IMR-90 (cell line): ENCODE measurements at regions of chr2 and their contacts with region 1.

Region 1: DNA sequence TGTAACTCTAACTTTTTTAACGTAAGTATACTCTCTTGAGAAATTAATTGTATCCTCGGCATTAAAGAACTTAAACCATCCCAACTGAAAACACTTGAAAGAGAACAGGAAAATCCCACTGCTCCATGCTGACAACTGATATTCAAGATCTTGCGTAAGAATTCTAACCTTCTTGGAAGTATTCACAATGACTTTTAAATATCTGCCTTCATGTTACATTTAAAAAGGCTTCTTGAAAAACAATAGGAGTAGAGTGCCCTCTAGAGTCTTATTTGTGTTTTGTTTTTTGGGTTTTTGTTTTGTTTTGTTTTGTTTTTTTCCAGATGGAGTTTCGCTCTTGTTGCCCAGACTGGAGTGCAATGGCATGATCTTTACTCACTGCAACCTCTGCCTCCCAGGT is 65.4 kb upstream of the DNAJC10 start:
- DNase-seq: peak; percentile 76
- ATAC-seq: peak; percentile 48; the same call in 1 of the 2 replicates
- H3K4me3 ChIP-seq: no peak overlapping the region
- H3K27ac ChIP-seq: no peak overlapping the region
- H3K4me1 ChIP-seq: no peaks in the 10 kb centered on the region
- H3K27me3 ChIP-seq: no peaks in the 10 kb centered on the region
- CTCF ChIP-seq: peak; percentile 62
- POLR2A ChIP-seq: no peak
- RAD21 ChIP-seq: peak; percentile 78

Region 2: DNA sequence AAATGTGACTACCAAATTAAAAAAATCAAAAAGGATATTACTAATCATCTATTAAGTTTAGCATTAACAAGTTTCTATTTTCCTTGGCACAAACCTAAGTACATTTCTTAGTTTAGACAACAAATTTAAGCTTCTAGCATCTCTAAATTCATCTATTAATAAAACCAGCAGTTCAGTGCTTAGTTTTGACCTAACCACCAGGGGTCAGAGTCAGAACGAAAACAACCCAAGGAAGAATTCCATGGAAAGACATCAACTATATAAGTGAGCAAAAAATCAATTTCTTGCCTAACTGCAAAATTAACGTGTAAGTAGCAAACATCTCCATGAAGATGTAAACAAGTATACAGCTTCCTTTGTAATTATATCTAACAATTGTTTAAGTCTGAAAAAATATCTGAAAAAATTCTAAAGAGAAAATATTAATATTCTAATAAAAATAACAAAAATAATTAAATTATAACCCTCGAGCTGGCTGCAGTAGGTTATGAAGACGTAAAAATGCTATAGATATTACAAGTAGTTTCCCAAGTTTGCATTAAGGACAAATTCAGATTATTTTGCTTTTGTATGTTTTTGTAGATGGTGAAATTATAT is 1077.5 kb before region 1 on chr2:
- CTCF ChIA-PET with region 1: no interaction called
- POLR2A ChIA-PET with region 1: no interaction called
- dilution Hi-C with region 1: no loop called
- in situ Hi-C with region 1: no loop called
- intact Hi-C with region 1: loop called (anchors 5 kb)
- DNase-seq: peak; percentile 50
- ATAC-seq: peak; percentile 54; the same call in 1 of the 2 replicates
- H3K4me3 ChIP-seq: no peak overlapping the region
- H3K27ac ChIP-seq: no peak overlapping the region
- H3K4me1 ChIP-seq: no peaks in the 10 kb centered on the region
- H3K27me3 ChIP-seq: peaks cover 9% of the 10 kb centered on the region
- CTCF ChIP-seq: peak; percentile 55
- POLR2A ChIP-seq: no peak
- RAD21 ChIP-seq: peak; percentile 47

Region 3: DNA sequence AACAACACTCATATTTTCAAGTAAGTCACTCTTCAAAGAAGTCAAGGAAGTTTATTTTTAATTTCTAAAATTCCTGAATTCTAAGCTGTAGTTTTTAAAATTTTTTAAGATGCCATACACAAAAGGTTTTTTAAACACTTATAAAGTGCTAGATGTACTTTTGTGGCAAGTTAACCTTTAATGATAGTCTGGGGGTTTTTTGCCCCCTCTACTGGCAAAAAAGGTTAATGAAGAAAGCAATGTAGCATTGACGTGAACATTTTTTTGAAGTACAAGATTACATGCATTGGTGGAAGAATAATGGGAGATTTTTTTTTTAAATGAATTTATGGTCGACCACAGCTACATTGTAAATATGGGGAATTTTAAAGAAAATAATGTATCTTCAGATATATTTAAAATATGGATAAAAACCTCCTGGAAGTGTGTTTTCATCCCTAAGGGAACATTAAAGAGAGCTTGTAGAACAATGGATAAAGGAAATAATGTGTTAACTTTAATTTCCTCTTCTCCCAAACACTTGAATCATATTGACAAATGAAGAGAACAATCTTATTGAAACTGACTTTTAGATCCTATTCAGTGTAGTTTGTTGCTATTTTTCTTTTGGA is 746.6 kb before region 1 on chr2:
- CTCF ChIA-PET with region 1: no interaction called
- POLR2A ChIA-PET with region 1: no interaction called
- dilution Hi-C with region 1: no loop called
- in situ Hi-C with region 1: loop called (anchors 25 kb)
- intact Hi-C with region 1: loop called (anchors 10 kb)
- DNase-seq: peak; percentile 50
- ATAC-seq: no peak
- H3K4me3 ChIP-seq: no peak overlapping the region
- H3K27ac ChIP-seq: no peak overlapping the region
- H3K4me1 ChIP-seq: peaks cover 3% of the 10 kb centered on the region; the same call in 1 of the 2 replicates
- H3K27me3 ChIP-seq: no peaks in the 10 kb centered on the region
- CTCF ChIP-seq: peak; percentile 64
- POLR2A ChIP-seq: no peak
- RAD21 ChIP-seq: peak; percentile 69

Region 4: GRCh38 chr2:182186132-182186735 is 464.5 kb before region 1 on chr2:
- CTCF ChIA-PET with region 1: interaction called, 15 read pairs
- POLR2A ChIA-PET with region 1: no interaction called
- dilution Hi-C with region 1: loop called (anchors 25 kb)
- in situ Hi-C with region 1: loop called (anchors 5 kb)
- intact Hi-C with region 1: loop called (anchors 1 kb)
- DNase-seq: peak; percentile 34
- ATAC-seq: peak; percentile 73
- H3K4me3 ChIP-seq: no peak overlapping the region
- H3K27ac ChIP-seq: no peak overlapping the region
- H3K4me1 ChIP-seq: no peaks in the 10 kb centered on the region
- H3K27me3 ChIP-seq: no peaks in the 10 kb centered on the region; the same call in 1 of the 2 replicates
- CTCF ChIP-seq: peak; percentile 86
- POLR2A ChIP-seq: 0 out of 2 replicates have a peak, but pooled peaks have one; percentile 36
- RAD21 ChIP-seq: peak; percentile 86

Region 5: GRCh38 chr2:182302174-182302573 is 348.5 kb before region 1 on chr2:
- CTCF ChIA-PET with region 1: interaction called, 3 read pairs
- POLR2A ChIA-PET with region 1: no interaction called
- dilution Hi-C with region 1: no loop called
- in situ Hi-C with region 1: no loop called
- intact Hi-C with region 1: loop called (anchors 5 kb)
- DNase-seq: peak; percentile 90
- ATAC-seq: peak; percentile 79
- H3K4me3 ChIP-seq: no peak overlapping the region
- H3K27ac ChIP-seq: peak overlapping the region; percentile 90; the same call in 1 of the 2 replicates
- H3K4me1 ChIP-seq: peaks cover 2% of the 10 kb centered on the region; the same call in 1 of the 2 replicates
- H3K27me3 ChIP-seq: no peaks in the 10 kb centered on the region
- CTCF ChIP-seq: no peak
- POLR2A ChIP-seq: no peak
- RAD21 ChIP-seq: no peak

Region 6: DNA sequence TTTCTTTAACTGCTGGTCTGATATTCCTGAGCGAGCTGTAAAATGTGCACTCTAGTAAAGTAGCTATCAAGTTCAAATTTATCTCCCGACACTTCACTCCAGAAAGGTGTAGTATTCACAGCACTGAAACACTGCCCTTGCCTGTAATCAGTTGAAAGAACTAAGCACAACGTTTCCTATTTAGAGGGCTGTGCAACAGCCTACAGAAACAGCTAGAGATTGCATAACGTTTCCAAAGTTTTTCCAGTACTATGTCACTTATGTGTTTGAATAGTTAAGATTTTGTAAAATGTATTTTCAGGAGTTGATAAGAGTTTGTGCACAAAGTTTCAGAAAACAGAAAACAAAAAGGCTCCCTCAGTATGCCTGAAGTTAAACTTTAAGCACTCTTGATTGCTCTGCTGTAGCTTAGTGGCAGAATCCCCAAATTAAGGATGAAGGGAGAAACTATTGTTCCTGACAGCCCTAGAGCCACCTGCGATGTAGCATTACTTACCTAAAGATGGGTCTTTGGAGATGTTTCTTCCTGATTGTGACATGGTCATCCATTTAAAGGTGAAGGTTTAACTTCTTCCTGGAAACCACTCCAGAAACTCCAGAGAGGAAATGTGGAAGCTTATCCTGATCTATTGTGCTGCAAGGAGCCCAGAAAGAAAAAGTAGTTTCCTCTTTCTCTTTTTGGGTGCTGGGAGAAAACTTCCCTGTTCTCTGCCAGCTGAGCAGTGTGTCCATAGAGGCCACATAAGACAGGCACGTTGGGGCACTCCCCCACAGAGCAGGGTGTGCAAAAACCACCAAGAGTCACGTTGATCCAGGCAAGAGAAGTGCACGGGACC is 224.4 kb before region 1 on chr2:
- CTCF ChIA-PET with region 1: no interaction called
- POLR2A ChIA-PET with region 1: no interaction called
- dilution Hi-C with region 1: no loop called
- in situ Hi-C with region 1: no loop called
- intact Hi-C with region 1: loop called (anchors 5 kb)
- DNase-seq: peak; percentile 57
- ATAC-seq: peak; percentile 85
- H3K4me3 ChIP-seq: peak overlapping the region; percentile 20; the same call in 1 of the 2 replicates
- H3K27ac ChIP-seq: peak overlapping the region; percentile 61; the same call in 1 of the 2 replicates
- H3K4me1 ChIP-seq: peaks cover 6% of the 10 kb centered on the region; the same call in 1 of the 2 replicates
- H3K27me3 ChIP-seq: no peaks in the 10 kb centered on the region
- CTCF ChIP-seq: no peak
- POLR2A ChIP-seq: no peak
- RAD21 ChIP-seq: no peak